Activated CD4-positive, alpha-beta T cell treated with anti-CD3 and anti-CD28 coated beads for 36 hours (primary cell): ENCODE measurements at regions of chrX and their contacts with region 1.

Region 1: DNA sequence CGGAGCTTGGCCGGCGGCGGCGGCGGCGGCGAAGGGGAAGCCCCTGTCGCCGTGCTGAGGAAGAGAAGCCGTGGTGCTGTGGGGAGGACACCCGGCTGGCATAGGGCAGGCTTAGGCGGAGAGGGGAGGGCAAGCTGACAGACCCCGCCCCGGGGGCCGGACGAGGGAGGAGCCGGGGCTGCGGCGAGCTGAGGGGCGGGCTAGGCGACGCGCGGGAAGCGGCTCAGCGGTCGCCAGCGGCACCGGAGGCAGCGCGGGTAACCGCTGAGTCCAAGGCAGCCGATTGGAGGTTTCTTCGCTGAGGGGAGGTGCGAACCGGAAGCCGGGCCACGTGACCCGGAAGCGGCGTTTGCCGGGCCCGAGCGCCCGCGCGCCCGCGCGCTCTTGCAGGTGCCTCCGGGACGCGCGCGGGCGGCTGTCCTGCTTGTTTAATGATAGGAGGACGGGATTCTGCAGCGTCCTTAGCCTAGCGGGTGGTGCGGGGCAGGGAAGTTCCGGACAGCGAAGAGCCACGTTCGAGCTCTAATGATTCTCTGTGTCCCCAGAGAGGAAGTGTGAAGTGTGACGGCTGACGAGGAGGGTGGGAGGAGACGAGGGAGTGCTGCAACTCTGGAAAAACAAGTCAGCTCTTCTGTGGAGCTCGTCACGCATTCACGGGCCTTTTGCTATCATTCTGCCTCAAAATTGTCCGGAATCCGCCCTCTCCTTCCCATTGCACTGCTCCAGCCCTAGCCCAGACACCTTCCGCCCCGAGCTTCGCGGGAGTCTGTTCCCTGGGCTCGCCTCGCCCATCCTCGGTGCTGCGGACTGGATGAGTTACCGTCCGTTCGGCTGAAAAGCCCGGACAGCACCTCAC is at the start of gene AP1S2:
- DNase-seq: peak; percentile 94
- ATAC-seq: peak; percentile 98
- H3K4me3 Mint-ChIP-seq: peak within 1 kb of the TSS; percentile 90
- H3K27ac Mint-ChIP-seq: peak within 1 kb of the TSS; percentile 96
- H3K4me1 Mint-ChIP-seq: peaks cover 20% of the 10 kb centered on the region
- H3K27me3 Mint-ChIP-seq: no peaks in the 10 kb centered on the region
- total RNA-seq, gene AP1S2: 22.3 to 24.5 TPM

Region 2: GRCh38 chrX:15335135-15336022 is 519.6 kb before region 1 on chrX and contains the start of gene PIGA:
- CTCF ChIA-PET with region 1: no interaction called
- POLR2A ChIA-PET with region 1: no interaction called
- intact Hi-C with region 1: loop called in 1 of 2 experiments (anchors 1 kb)
- DNase-seq: peak; percentile 94
- ATAC-seq: peak; percentile 97
- H3K4me3 Mint-ChIP-seq: peak within 1 kb of the TSS; percentile 84
- H3K27ac Mint-ChIP-seq: peak within 1 kb of the TSS; percentile 91
- H3K4me1 Mint-ChIP-seq: peaks cover 14% of the 10 kb centered on the region
- H3K27me3 Mint-ChIP-seq: peaks cover 4% of the 10 kb centered on the region
- total RNA-seq, gene PIGA: 37.2 to 37.9 TPM

Region 3: GRCh38 chrX:15737960-15738902 is 116.7 kb before region 1 on chrX and contains the start of gene CA5B:
- CTCF ChIA-PET with region 1: no interaction called
- POLR2A ChIA-PET with region 1: interaction called, 5 read pairs
- intact Hi-C with region 1: loop called (anchors 1 to 5 kb)
- DNase-seq: peak; percentile 97
- ATAC-seq: peak; percentile 94
- H3K4me3 Mint-ChIP-seq: peak within 1 kb of the TSS; percentile 82
- H3K27ac Mint-ChIP-seq: peak within 1 kb of the TSS; percentile 78
- H3K4me1 Mint-ChIP-seq: peaks cover 40% of the 10 kb centered on the region
- H3K27me3 Mint-ChIP-seq: no peaks in the 10 kb centered on the region
- total RNA-seq, gene CA5B: 13.3 to 17.7 TPM

Region 4: DNA sequence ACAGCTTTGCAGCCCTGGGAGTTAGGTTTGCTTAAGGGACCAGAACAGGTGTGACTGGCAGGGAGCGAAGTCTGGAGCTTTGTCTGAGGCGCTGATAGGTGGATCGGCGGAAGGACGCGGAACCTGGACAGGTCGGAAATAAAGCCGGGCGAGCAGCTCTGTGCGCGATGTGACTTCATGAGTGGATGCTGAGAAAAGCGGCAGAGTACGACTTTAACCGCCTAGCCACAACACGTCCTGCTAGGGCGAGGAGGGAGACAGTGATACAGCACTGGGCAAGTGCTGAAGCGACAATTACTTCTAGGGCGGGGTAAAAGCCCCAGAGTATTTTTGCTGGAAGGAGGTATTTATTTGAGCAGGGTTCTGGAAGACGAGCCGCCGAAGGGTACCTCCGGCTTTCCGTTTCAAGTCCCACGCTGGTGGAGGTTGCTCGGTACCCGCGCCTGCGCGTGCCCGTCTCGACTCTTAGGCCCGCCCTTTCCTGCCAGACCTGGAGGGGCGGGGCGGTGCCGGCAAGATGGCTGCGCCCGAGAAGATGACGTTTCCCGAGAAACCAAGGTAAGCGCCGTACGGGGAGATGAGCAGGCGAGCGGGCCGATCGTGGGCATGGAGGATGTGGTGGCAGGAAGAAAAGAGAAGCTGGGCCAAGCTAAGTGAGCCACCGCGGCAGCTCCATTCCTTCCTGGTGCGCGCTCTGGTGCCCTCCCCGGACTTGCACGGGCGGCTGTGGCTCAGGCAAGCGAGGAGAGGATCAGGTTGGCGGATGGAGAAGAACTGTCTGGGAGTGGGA is 64.8 kb before region 1 on chrX and contains the start of gene ZRSR2:
- CTCF ChIA-PET with region 1: no interaction called
- POLR2A ChIA-PET with region 1: interaction called, 3 read pairs
- intact Hi-C with region 1: loop called (anchors 1 kb)
- DNase-seq: peak; percentile 92
- ATAC-seq: peak; percentile 91
- H3K4me3 Mint-ChIP-seq: no peak within 1 kb of the TSS
- H3K27ac Mint-ChIP-seq: no peak within 1 kb of the TSS
- H3K4me1 Mint-ChIP-seq: peaks cover 18% of the 10 kb centered on the region
- H3K27me3 Mint-ChIP-seq: no peaks in the 10 kb centered on the region
- total RNA-seq, gene ZRSR2: 12.4 TPM

Region 5: DNA sequence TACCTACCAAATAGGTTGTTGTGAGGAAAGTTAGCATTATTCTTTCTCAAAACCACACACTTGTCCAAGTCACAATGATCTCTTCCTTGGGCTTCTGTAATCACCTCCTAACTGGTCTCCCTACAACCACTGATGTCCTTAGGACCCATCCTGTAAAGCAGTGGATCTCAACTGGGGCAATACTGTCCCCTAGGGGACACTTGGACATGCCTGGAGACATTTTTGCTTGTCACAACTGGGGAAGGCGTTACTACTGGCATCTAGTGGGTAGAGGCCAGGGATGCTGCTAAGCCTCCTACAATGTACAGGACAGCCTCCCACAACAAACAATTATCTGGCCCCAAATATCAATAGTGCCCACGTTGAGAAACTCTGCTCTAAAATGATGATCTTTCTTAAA is 118.4 kb after region 1 on chrX:
- CTCF ChIA-PET with region 1: no interaction called
- POLR2A ChIA-PET with region 1: no interaction called
- intact Hi-C with region 1: loop called in 1 of 2 experiments (anchors 10 kb)
- DNase-seq: peak; percentile 34
- ATAC-seq: peak; percentile 69
- H3K4me3 Mint-ChIP-seq: no peak overlapping the region
- H3K27ac Mint-ChIP-seq: no peak overlapping the region
- H3K4me1 Mint-ChIP-seq: peaks cover 6% of the 10 kb centered on the region
- H3K27me3 Mint-ChIP-seq: no peaks in the 10 kb centered on the region

Region 6: DNA sequence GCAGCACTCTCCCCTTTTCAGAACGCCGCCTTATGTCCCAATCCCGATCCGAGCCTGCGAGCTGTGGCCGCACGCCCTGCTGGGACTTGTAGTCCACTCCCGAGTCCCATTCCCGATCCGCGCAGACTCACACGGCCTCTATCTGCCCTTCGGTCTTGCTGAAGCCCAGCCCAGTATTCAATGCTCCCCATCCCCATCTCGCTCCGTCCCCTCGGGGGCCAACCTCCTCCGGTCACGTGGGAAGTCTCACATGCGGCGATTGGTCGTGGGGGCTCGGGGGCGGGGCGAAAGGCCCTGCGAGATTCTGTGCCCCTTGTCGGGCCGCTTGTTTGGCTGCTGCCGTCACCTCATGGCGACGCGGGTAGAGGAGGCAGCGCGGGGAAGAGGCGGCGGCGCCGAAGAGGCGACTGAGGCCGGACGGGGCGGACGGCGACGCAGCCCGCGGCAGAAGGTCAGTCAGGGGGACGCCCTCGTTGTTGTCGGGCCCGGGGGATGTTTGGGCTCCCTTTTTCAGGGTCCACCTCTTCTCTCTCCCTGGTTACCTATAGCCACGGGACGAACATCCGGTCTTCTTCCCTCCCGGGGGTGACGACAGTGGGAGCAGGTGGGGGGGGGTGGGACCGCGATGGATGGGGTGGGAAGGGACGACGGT is 931.3 kb after region 1 on chrX and contains the start of gene TXLNG:
- CTCF ChIA-PET with region 1: no interaction called
- POLR2A ChIA-PET with region 1: no interaction called
- intact Hi-C with region 1: loop called in 1 of 2 experiments (anchors 10 kb)
- DNase-seq: peak; percentile 96
- ATAC-seq: peak; percentile 99
- H3K4me3 Mint-ChIP-seq: peak within 1 kb of the TSS; percentile 93
- H3K27ac Mint-ChIP-seq: peak within 1 kb of the TSS; percentile 76
- H3K4me1 Mint-ChIP-seq: peaks cover 18% of the 10 kb centered on the region
- H3K27me3 Mint-ChIP-seq: no peaks in the 10 kb centered on the region
- total RNA-seq, gene TXLNG: 17.3 to 21.4 TPM